ENCODE measurements at regions of chr4 and their contacts with region 1.

Region 1: DNA sequence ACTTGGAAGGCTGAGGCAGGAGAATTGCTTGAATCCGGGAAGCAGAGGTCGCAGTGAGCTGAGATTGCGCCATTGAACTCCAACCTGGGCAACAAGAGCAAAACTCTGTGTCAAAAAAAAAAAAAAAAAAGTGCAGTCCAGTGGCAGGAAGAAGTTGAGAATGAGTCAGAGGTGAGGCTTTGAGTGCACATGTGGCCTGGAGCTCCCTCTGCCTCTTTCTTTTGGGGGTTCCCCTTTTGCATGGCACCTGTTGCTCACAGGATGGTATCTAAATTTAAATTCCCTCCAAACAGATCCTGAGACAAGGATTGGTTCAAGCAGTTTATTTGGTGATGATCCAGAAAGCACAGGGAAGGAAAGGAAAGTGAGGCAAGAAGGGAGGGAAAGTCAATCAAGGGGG is 151.4 kb upstream of the STX18 start:
- DNase-seq: peak in 1 of 2 experiments; percentile 68
- H3K4me3 ChIP-seq: no peak overlapping the region
- H3K27ac ChIP-seq: no peak overlapping the region
- H3K4me1 ChIP-seq: peaks cover 15% of the 10 kb centered on the region; the same call in 1 of the 2 replicates
- H3K27me3 ChIP-seq: no peaks in the 10 kb centered on the region
- CTCF ChIP-seq: no peak

Region 2: DNA sequence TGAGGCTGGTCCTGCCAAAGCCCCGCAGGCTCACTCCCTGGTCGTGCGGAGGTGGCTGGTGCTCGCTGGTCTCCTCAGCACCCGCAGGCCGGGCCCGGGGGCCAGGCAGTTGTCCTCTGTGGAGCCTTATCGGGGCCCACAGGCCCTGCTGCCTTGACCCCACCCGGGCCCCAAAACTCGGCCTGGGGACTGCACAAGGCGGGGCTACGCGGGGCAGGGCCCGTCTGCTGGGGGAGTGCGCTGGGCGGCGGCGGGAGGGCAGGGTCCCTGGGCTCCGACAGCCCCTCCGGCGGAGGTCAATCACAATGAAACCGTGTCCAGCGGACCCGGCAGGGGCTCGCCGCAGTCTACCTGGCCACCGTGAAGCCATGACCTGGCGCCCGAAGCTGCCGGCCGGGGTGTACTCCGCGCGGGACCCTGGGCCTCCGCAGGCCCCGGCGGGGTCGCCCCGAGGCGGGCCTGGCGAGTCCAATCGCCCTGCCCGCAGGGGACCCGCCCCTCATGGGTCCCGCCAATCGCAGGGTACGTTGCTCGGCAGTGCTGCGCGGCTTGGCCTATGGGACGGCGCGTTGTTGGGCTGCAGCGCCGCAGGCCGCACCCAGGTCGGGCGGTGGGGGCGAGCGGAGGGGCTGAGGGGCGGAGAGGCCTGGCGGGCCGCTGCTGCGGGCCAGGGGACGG is 1849.9 kb before region 1 on chr4 and contains the start of gene ADD1:
- CTCF ChIA-PET with region 1: no interaction called
- POLR2A ChIA-PET with region 1: no interaction called
- intact Hi-C with region 1: no loop called
- DNase-seq: peak; percentile 76 to 98
- H3K4me3 ChIP-seq: peak within 1 kb of the TSS; percentile 87
- H3K27ac ChIP-seq: no peak within 1 kb of the TSS
- H3K4me1 ChIP-seq: peaks cover 9% of the 10 kb centered on the region; the same call in 1 of the 2 replicates
- H3K27me3 ChIP-seq: no peaks in the 10 kb centered on the region
- CTCF ChIP-seq: no peak
- total RNA-seq, gene ADD1: 178 and 181 TPM in 2 replicates

Region 3: GRCh38 chr4:4524364-4524763 is 168.9 kb before region 1 on chr4:
- CTCF ChIA-PET with region 1: interaction called, 11 read pairs
- POLR2A ChIA-PET with region 1: no interaction called
- intact Hi-C with region 1: no loop called
- DNase-seq: no peak
- H3K4me3 ChIP-seq: no peak overlapping the region
- H3K27ac ChIP-seq: no peak overlapping the region
- H3K4me1 ChIP-seq: no peaks in the 10 kb centered on the region
- H3K27me3 ChIP-seq: no peaks in the 10 kb centered on the region
- CTCF ChIP-seq: no peak

Measured in PC-9 (cell line).